Posterior cingulate gyrus (tissue), 11 donors: ENCODE measurements at regions of chr18 and their contacts with region 1.

Region 1: DNA sequence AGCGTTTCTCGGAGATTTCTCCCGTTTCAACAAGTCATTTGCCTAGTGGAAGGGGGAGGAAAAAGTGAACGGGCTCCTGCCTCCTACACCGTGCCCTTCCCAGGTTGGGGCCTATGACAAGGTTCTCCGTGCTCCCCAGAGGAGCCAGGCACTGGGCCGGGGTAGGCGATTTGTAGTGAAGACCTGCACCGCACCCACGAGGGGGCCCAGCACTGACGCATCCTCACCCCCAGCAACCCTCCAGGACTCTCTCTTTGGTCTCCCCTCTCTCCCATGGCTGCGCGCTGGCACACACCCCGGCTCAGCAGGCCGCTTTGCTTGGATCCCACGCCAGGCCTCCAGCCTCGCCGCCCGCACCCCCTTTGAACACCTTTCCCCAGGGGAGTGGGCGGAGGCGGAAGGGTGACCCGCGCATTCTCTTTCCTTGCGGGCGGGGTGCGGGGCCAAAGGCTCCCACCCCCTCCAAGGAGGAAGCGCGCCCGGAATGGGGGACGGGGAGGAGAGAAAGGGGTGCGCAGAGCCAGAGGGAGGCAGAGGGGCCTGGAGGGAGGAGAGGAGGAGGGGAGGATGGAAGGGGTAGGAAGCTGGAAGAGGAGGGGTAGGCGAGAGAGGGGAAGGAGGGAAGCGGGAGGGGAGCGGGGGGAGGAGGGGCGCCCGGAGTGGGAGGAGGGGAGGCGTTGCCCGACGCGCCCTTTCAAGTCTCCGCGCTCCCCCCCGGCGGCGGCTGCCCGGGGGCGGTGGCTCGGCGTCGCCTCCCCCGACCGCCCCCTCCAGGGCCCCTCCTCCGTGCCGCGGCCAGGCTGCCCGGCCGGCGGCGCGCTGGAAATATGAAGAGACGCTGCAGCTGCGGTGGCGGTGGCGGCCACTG is at the start of gene APCDD1:
- DNase-seq: peak in 9 of 10 donors; percentile 55 to 96 (median 69)

Region 2: DNA sequence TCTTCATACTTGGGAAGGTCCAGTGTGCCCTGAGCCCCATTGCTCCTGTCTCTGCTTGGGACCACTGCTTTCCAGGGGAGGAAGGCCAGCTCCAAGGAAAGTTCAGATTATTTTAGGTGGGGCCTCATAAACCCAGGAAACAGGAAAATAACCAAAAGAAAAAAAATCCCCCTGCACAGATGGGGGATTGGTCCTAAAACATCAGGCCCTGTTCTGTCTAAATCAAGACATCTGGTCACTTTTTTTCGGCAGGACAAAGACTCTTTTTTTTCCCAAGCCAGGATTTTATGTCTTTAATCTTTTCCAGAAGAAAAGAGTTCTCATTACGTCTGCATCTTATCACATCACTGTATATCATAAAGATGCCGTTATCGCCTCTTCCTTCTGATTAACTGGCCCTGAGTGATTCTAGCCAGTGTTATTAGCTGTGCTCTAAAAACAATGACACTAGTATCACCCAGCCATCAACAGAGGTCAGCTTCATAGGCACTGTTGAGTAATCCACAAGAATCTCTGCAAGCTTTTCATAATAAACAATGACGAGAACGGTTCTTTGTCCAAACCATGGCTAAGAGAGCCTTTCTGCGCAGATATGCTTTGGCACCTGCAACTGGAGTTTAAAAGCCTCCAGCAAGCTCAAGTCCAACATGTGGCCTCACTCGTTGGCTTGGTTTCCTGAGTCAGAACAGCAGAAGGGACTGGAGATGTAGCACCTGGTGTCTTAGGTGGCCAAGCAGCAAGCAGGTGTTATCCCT is 402.0 kb before region 1 on chr18:
- intact Hi-C with region 1: loop called (anchors 5 kb)
- DNase-seq: peak in 4 of 10 donors; percentile 21 to 88 (median 58)

Region 3: GRCh38 chr18:10499230-10499629 is 45.2 kb after region 1 on chr18:
- intact Hi-C with region 1: no loop called
- DNase-seq: no peak

Region 4: GRCh38 chr18:10591896-10592295 is 137.9 kb after region 1 on chr18:
- intact Hi-C with region 1: no loop called
- DNase-seq: no peak

Region 5: DNA sequence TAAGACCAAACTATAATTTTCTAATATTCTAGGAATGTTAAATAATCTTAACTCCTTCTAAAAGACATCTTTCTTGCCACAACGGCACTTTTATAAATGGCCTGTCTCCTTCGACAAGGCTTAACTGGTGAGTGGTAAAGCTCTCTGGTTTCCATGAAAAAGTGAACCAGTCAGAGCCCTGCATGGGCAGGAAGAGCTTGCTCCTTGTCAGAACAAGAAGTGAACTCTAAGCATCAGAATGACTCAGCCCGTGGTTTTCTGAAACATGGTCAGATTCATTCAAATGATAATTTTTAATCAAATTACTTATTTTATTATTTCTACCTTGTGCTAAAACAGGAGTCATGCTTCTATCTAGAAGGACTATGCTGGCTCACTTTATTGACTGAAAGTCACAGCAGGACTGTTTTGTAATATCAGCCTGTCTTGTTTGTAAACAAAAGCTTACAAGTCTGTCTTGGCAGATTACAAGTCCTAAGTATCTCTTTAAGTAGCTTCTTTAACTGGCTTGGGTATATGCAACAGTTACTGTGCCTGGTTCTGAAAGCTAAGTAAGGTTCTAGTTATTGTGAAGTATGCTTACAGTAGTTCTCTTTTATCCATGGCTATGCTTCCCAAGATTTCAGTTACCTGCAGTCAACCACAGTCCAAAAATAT is 317.1 kb after region 1 on chr18:
- intact Hi-C with region 1: no loop called
- DNase-seq: no peak